OCI-LY7 (cell line): ENCODE measurements at regions of chr1 and their contacts with region 1.

Region 1: GRCh38 chr1:176183618-176184017 is 23.5 kb downstream of the COP1 start:
- DNase-seq: no peak
- H3K4me3 ChIP-seq: peak overlapping the region; percentile 42
- H3K27ac ChIP-seq: peak overlapping the region; percentile 12
- H3K4me1 ChIP-seq: peaks cover 73% of the 10 kb centered on the region
- CTCF ChIP-seq: no peak

Region 2: GRCh38 chr1:176058686-176059085 is 124.9 kb before region 1 on chr1:
- CTCF ChIA-PET with region 1: no interaction called
- POLR2A ChIA-PET with region 1: no interaction called
- intact Hi-C with region 1: no loop called
- DNase-seq: peak; percentile 4
- H3K4me3 ChIP-seq: no peak overlapping the region
- H3K27ac ChIP-seq: no peak overlapping the region
- H3K4me1 ChIP-seq: no peaks in the 10 kb centered on the region
- CTCF ChIP-seq: no peak

Region 3: GRCh38 chr1:176196728-176197127 is 13.1 kb after region 1 on chr1:
- CTCF ChIA-PET with region 1: no interaction called
- POLR2A ChIA-PET with region 1: interaction called, 25 read pairs
- intact Hi-C with region 1: no loop called
- DNase-seq: no peak
- H3K4me3 ChIP-seq: no peak overlapping the region
- H3K27ac ChIP-seq: no peak overlapping the region
- H3K4me1 ChIP-seq: peaks cover 39% of the 10 kb centered on the region
- CTCF ChIP-seq: no peak

Region 4: DNA sequence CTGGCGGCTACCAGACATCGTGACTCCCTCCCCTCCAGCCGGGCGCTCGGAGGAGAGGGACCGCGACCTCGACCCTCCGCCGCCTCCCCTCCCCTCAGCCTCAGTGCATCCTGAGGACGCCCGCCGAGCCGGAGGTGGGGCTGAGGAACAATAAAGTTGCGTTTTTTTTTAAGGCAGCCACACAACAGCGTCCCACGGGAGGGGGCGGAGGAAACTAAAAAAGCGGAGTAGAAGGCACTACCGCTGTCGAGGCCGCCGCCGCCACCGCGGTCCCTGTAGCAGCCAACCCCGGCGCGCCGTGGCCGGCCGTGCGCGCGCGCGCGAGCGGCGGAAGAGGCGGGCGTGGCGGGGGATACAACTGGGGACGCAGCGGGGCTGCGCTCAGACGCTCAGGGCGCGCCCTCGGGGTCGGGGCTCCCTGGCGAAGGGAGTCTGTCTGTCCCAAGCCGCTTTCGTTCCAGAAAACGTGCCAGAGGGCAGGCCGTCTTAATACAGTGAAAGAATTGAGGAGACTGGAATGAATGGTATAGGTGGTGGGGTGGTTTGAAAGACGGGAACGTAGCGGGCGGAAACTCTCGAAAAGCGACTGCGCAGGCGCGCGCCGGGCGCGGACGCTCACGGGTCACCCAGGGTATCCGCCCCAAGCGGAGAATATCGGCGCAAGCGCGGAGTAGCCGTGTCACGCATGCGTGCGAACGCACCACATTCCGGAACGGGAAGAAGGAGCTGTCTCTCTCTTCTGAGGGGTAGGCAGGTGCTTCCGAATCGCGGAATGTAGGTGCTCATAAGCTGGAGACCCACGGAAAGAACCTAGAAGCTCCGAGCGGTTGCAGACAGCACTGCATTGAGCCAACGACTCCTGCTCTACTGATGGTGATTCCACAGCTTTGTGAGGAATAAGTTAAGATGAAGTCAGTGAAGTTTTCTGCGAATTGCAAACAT is 23.6 kb after region 1 on chr1 and contains the start of gene COP1:
- CTCF ChIA-PET with region 1: no interaction called
- POLR2A ChIA-PET with region 1: interaction called, 22 read pairs
- intact Hi-C with region 1: no loop called
- DNase-seq: peak; percentile 99
- H3K4me3 ChIP-seq: peak within 1 kb of the TSS; percentile 99
- H3K27ac ChIP-seq: peak within 1 kb of the TSS; percentile 94
- H3K4me1 ChIP-seq: peaks cover 30% of the 10 kb centered on the region
- CTCF ChIP-seq: 0 out of 2 replicates have a peak, but pooled peaks have one; percentile 8
- total RNA-seq, gene COP1: 75.2 and 78.2 TPM in 2 replicates

Region 5: DNA sequence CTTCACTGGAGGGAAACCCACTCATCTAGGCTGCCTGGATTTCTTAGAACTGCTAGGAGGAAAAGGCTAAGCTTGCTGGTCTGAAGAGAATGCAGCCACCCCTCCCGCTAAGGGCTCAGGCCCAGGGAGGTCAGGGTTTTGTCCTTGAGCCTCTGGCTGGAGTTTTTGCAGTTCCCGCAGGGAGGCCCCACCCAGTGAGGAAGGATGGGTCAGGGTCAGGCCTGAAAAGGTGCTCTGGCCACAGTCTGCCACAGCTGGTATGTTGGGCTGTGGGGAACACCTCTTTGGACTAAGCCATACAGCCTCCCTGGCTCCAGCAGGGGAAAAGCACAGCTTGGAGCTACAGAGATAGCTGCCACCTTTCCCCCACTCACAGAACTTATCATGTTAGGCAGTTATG is 208.0 kb after region 1 on chr1:
- CTCF ChIA-PET with region 1: no interaction called
- POLR2A ChIA-PET with region 1: no interaction called
- intact Hi-C with region 1: no loop called
- DNase-seq: no peak
- H3K4me3 ChIP-seq: no peak overlapping the region
- H3K27ac ChIP-seq: no peak overlapping the region
- H3K4me1 ChIP-seq: no peaks in the 10 kb centered on the region
- CTCF ChIP-seq: no peak